PC-9 (cell line): ENCODE measurements at regions of chr17 and their contacts with region 1.

Region 1: GRCh38 chr17:40062329-40063186 is at the start of gene THRA:
- DNase-seq: peak in 1 of 2 experiments; percentile 60
- H3K4me3 ChIP-seq: peak within 1 kb of the TSS; percentile 95
- H3K27ac ChIP-seq: no peak within 1 kb of the TSS
- H3K4me1 ChIP-seq: peaks cover 24% of the 10 kb centered on the region; the same call in 1 of the 2 replicates
- H3K27me3 ChIP-seq: peaks cover 8% of the 10 kb centered on the region; the same call in 1 of the 2 replicates
- CTCF ChIP-seq: peak; percentile 35; the same call in 1 of the 2 replicates
- total RNA-seq, gene THRA: 11.4 and 13.9 TPM in 2 replicates

Region 2: GRCh38 chr17:39963829-39964228 is 98.7 kb before region 1 on chr17:
- CTCF ChIA-PET with region 1: interaction called, 14 read pairs
- POLR2A ChIA-PET with region 1: no interaction called
- intact Hi-C with region 1: no loop called
- DNase-seq: peak; percentile 39 to 87
- H3K4me3 ChIP-seq: no peak overlapping the region
- H3K27ac ChIP-seq: no peak overlapping the region
- H3K4me1 ChIP-seq: peaks cover 11% of the 10 kb centered on the region
- H3K27me3 ChIP-seq: no peaks in the 10 kb centered on the region
- CTCF ChIP-seq: no peak

Region 3: DNA sequence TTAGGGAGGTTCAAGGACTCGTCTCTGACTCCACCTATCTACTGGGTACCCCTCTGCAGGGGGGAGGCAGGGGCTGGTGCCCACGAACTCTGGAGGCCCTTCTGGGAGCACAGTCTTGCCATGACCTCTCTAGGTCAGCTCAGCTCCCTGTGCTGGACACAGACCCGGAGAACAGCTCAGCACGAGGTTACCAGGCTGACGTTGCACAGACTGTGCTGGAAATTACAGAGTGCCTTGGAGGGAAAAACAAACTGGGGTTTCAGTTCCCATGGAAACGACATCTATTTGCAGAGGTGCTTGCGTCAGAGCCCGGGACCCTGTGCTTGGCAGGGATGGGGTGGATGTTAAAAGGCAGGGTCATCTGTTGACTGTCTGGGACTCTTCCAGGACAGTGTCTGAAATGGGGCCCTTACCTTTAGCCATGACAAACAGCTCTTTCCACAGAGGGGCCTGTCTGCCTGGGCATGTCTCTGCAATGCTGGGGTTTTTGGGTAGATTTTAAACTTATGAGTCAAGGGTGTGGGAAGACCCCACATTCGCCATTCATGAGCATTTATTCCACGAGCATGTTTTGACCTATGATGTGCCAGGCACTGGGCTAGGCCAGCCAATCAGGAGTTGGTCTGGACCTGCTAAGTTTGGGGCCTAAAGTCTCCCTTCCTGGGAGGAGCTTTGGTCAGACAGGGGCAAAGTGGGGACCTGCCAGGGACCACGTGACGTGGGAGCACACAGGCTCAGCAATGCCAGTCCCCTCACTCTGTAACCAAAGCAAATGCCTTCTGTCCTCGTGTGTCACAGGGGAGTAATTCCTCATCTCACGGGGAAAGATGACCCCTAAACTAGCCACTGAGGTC is 480.2 kb after region 1 on chr17:
- CTCF ChIA-PET with region 1: no interaction called
- POLR2A ChIA-PET with region 1: no interaction called
- intact Hi-C with region 1: no loop called
- DNase-seq: no peak
- H3K4me3 ChIP-seq: no peak overlapping the region
- H3K27ac ChIP-seq: no peak overlapping the region
- H3K4me1 ChIP-seq: peaks cover 5% of the 10 kb centered on the region
- H3K27me3 ChIP-seq: no peaks in the 10 kb centered on the region
- CTCF ChIP-seq: no peak